PC-3 (cell line): ENCODE measurements at regions of chr1 and their contacts with region 1.

Region 1: GRCh38 chr1:32215629-32216480 is 6.3 kb downstream of the TMEM234 start:
- DNase-seq: peak; percentile 81
- ATAC-seq: peak; percentile 84
- H3K4me3 ChIP-seq: peak overlapping the region; percentile 21; the same call in 1 of the 2 replicates
- H3K27ac ChIP-seq: peak overlapping the region; percentile 94
- H3K4me1 ChIP-seq: peaks cover 32% of the 10 kb centered on the region
- H3K27me3 ChIP-seq: no peaks in the 10 kb centered on the region
- CTCF ChIP-seq: peak; percentile 87

Region 2: DNA sequence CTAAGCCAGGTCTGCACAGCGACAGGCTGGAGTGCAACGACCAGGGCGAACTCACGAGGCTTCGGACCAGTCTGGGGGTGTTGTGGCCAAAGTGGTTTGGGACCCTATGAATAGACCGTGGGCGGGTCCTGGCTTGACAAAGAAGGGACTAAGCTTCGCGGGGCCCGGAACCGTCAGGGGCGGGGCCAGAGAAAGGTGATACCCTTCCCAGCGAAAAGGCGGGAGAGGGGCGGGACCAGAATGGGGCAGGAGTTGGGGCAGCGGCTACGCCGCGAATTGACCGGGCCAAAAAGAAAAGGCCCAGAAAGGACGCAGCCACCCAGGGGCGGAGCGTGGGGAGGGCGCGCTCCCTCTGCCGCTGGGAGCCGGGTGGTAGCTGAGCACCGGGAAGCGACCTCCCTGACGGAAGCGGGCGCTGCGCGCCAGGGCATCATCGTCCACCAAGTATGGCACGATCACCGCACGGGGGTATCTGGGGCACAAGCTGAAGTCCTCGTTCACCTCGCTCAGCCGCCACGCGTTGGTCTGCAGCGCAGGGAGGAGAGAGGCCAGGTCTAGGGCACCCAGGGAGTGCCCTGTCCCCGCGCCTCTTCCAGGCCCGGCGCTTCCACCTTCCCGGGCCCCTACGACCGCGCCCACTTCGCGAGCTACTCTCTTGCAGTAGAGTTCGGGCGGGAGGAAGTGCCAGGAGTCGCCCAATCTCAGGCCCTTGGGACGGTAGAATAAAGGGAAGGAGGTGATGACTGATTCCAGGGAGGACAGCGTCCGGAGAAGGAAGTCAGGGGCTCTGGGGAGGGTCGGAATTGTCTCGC is 24.5 kb after region 1 on chr1:
- CTCF ChIA-PET with region 1: interaction called, 17 read pairs
- POLR2A ChIA-PET with region 1: interaction called, 3 read pairs
- intact Hi-C with region 1: no loop called
- DNase-seq: peak; percentile 75
- ATAC-seq: peak; percentile 63
- H3K4me3 ChIP-seq: peak overlapping the region; percentile 81
- H3K27ac ChIP-seq: peak overlapping the region; percentile 29
- H3K4me1 ChIP-seq: peaks cover 31% of the 10 kb centered on the region
- H3K27me3 ChIP-seq: no peaks in the 10 kb centered on the region
- CTCF ChIP-seq: peak; percentile 51

Region 3: GRCh38 chr1:32247983-32248889 is 32.4 kb after region 1 on chr1:
- CTCF ChIA-PET with region 1: interaction called, 13 read pairs
- POLR2A ChIA-PET with region 1: no interaction called
- intact Hi-C with region 1: no loop called
- DNase-seq: peak; percentile 69
- ATAC-seq: peak; percentile 53
- H3K4me3 ChIP-seq: peak overlapping the region; percentile 28; the same call in 1 of the 2 replicates
- H3K27ac ChIP-seq: no peak overlapping the region
- H3K4me1 ChIP-seq: peaks cover 16% of the 10 kb centered on the region; the same call in 1 of the 2 replicates
- H3K27me3 ChIP-seq: no peaks in the 10 kb centered on the region
- CTCF ChIP-seq: peak; percentile 79

Region 4: GRCh38 chr1:32291708-32292492 is 76.0 kb after region 1 on chr1 and contains the start of gene HDAC1:
- CTCF ChIA-PET with region 1: interaction called, 7 read pairs
- POLR2A ChIA-PET with region 1: no interaction called
- intact Hi-C with region 1: loop called (anchors 5 kb)
- DNase-seq: peak; percentile 98
- ATAC-seq: peak; percentile 86
- H3K4me3 ChIP-seq: peak within 1 kb of the TSS; percentile 88
- H3K27ac ChIP-seq: peak within 1 kb of the TSS; percentile 81
- H3K4me1 ChIP-seq: peaks cover 30% of the 10 kb centered on the region
- H3K27me3 ChIP-seq: no peaks in the 10 kb centered on the region
- CTCF ChIP-seq: no peak
- total RNA-seq, gene HDAC1: 182 and 184 TPM in 2 replicates

Region 5: GRCh38 chr1:32321712-32322291 is 105.9 kb after region 1 on chr1:
- CTCF ChIA-PET with region 1: interaction called, 10 read pairs
- POLR2A ChIA-PET with region 1: interaction called, 4 read pairs
- intact Hi-C with region 1: loop called (anchors 5 kb)
- DNase-seq: peak; percentile 90
- ATAC-seq: peak; percentile 95
- H3K4me3 ChIP-seq: peak overlapping the region; percentile 36
- H3K27ac ChIP-seq: peak overlapping the region; percentile 91
- H3K4me1 ChIP-seq: peaks cover 23% of the 10 kb centered on the region
- H3K27me3 ChIP-seq: no peaks in the 10 kb centered on the region
- CTCF ChIP-seq: no peak

Region 6: DNA sequence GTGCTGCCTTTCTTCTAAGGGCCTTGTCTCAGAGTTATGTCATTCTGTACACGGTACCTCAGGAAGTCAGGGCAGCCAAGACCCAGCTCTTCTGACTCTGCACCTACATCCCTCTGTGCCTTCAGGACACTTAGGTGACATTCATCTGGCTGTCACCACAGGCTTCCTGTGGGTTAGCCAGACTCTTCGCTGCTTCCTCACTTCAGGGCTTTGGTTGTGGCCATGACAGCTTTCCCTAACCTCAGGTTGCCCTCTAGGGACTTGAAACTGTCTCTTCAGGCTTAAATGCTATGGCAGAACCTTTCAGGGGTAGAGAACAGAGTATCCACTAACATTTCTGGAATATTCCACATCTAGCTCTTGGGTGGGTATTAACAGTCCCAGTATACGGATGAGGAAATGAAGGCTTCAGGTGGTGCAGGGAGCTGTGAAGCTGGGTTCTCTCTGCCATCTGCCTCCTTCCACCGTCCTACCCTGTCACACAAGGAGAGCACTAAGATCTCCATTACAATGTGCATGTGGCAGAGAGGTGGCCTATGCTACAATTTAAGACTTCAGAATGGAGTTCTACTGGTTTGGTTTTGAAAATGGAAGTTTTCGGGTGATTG is 156.4 kb after region 1 on chr1:
- CTCF ChIA-PET with region 1: no interaction called
- POLR2A ChIA-PET with region 1: no interaction called
- intact Hi-C with region 1: loop called (anchors 5 kb)
- DNase-seq: peak; percentile 33
- ATAC-seq: peak; percentile 68
- H3K4me3 ChIP-seq: no peak overlapping the region
- H3K27ac ChIP-seq: no peak overlapping the region
- H3K4me1 ChIP-seq: no peaks in the 10 kb centered on the region
- H3K27me3 ChIP-seq: no peaks in the 10 kb centered on the region
- CTCF ChIP-seq: peak; percentile 27

Region 7: GRCh38 chr1:32413507-32414185 is 197.8 kb after region 1 on chr1:
- CTCF ChIA-PET with region 1: no interaction called
- POLR2A ChIA-PET with region 1: no interaction called
- intact Hi-C with region 1: loop called (anchors 5 kb)
- DNase-seq: peak; percentile 88
- ATAC-seq: peak; percentile 92
- H3K4me3 ChIP-seq: no peak overlapping the region
- H3K27ac ChIP-seq: no peak overlapping the region
- H3K4me1 ChIP-seq: no peaks in the 10 kb centered on the region
- H3K27me3 ChIP-seq: no peaks in the 10 kb centered on the region
- CTCF ChIP-seq: peak; percentile 89